ENCODE measurements at regions of chr10 and their contacts with region 1.

Region 1: GRCh38 chr10:36759141-36759805 is 366.1 kb upstream of the ANKRD30A start:
- DNase-seq: peak; percentile 100
- ATAC-seq: peak; percentile 97
- H3K4me3 ChIP-seq: no peak overlapping the region
- H3K27ac ChIP-seq: peak overlapping the region; percentile 55
- H3K4me1 ChIP-seq: peaks cover 30% of the 10 kb centered on the region
- H3K27me3 ChIP-seq: no peaks in the 10 kb centered on the region
- CTCF ChIP-seq: no peak

Region 2: GRCh38 chr10:36736311-36736710 is 23.0 kb before region 1 on chr10:
- CTCF ChIA-PET with region 1: no interaction called
- POLR2A ChIA-PET with region 1: no interaction called
- intact Hi-C with region 1: loop called (anchors 1 kb)
- DNase-seq: peak; percentile 75
- ATAC-seq: peak; percentile 15; the same call in 1 of the 2 replicates
- H3K4me3 ChIP-seq: no peak overlapping the region
- H3K27ac ChIP-seq: no peak overlapping the region
- H3K4me1 ChIP-seq: peaks cover 46% of the 10 kb centered on the region
- H3K27me3 ChIP-seq: no peaks in the 10 kb centered on the region
- CTCF ChIP-seq: no peak

Region 3: DNA sequence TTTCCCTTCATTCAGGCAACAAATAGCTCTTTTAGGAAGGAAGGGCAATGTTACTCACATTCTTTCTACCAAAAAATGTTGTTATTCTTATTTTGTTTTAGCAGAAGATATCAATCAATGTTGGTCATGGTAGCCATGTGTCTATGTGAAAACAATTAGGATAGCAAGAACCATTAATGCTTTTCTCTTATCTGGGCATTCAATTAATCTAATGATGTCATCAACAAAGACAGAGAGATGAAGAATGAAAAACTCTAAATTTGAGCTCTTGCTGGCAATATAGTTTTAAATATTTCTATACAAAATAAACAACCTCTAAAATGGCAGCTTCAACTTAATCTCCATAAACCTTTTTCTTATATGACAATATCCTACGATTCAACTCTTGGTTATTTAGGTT is 12.5 kb after region 1 on chr10:
- CTCF ChIA-PET with region 1: no interaction called
- POLR2A ChIA-PET with region 1: interaction called, 11 read pairs
- intact Hi-C with region 1: no loop called
- DNase-seq: no peak
- ATAC-seq: no peak
- H3K4me3 ChIP-seq: no peak overlapping the region
- H3K27ac ChIP-seq: no peak overlapping the region
- H3K4me1 ChIP-seq: 0 out of 2 replicates have a peak, but pooled peaks cover 2% of the 10 kb centered on the region
- H3K27me3 ChIP-seq: no peaks in the 10 kb centered on the region
- CTCF ChIP-seq: no peak

Region 4: GRCh38 chr10:36880898-36881297 is 121.6 kb after region 1 on chr10:
- CTCF ChIA-PET with region 1: no interaction called
- POLR2A ChIA-PET with region 1: no interaction called
- intact Hi-C with region 1: no loop called
- DNase-seq: peak; percentile 93
- ATAC-seq: peak; percentile 86
- H3K4me3 ChIP-seq: no peak overlapping the region
- H3K27ac ChIP-seq: no peak overlapping the region
- H3K4me1 ChIP-seq: no peaks in the 10 kb centered on the region
- H3K27me3 ChIP-seq: 0 out of 2 replicates have a peak, but pooled peaks cover 3% of the 10 kb centered on the region
- CTCF ChIP-seq: peak; percentile 86

Measured in PC-3 (cell line).